A673 (cell line): ENCODE measurements at regions of chr6 and their contacts with region 1.

Region 1: GRCh38 chr6:68043122-68043398 is 592.0 kb upstream of the ADGRB3 start:
- DNase-seq: no peak
- H3K4me3 ChIP-seq: no peak overlapping the region
- H3K27ac ChIP-seq: no peak overlapping the region
- H3K4me1 ChIP-seq: no peaks in the 10 kb centered on the region
- H3K27me3 ChIP-seq: no peaks in the 10 kb centered on the region
- CTCF ChIP-seq: no peak

Region 2: GRCh38 chr6:67045076-67045475 is 998.0 kb before region 1 on chr6:
- CTCF ChIA-PET with region 1: no interaction called
- POLR2A ChIA-PET with region 1: interaction called, 10 read pairs
- intact Hi-C with region 1: no loop called
- DNase-seq: no peak
- H3K4me3 ChIP-seq: no peak overlapping the region
- H3K27ac ChIP-seq: no peak overlapping the region
- H3K4me1 ChIP-seq: no peaks in the 10 kb centered on the region
- H3K27me3 ChIP-seq: no peaks in the 10 kb centered on the region
- CTCF ChIP-seq: no peak

Region 3: GRCh38 chr6:67880939-67881705 is 161.9 kb before region 1 on chr6:
- CTCF ChIA-PET with region 1: no interaction called
- POLR2A ChIA-PET with region 1: no interaction called
- intact Hi-C with region 1: no loop called
- DNase-seq: no peak
- H3K4me3 ChIP-seq: no peak overlapping the region
- H3K27ac ChIP-seq: no peak overlapping the region
- H3K4me1 ChIP-seq: no peaks in the 10 kb centered on the region
- H3K27me3 ChIP-seq: no peaks in the 10 kb centered on the region
- CTCF ChIP-seq: no peak

Region 4: DNA sequence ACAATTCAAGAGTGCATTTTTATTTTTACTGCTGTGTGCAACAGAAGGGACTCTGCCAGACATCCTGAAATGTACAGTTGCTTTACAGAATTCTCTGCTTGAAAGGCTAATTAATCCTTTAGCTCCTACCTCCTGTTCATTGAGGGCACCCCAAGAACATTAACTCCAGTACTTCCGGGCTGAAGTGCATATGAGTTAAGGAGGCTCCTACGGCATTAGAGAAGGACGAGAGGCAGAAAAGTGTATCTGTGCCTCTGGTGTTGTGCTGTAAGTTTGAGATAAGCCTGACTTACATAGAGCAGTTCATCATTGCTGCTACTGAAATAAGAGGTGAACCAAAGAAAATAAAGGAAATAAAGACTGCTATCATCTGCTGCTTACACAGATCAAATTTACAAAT is 17.3 kb before region 1 on chr6:
- CTCF ChIA-PET with region 1: no interaction called
- POLR2A ChIA-PET with region 1: no interaction called
- intact Hi-C with region 1: no loop called
- DNase-seq: no peak
- H3K4me3 ChIP-seq: no peak overlapping the region
- H3K27ac ChIP-seq: no peak overlapping the region
- H3K4me1 ChIP-seq: no peaks in the 10 kb centered on the region
- H3K27me3 ChIP-seq: no peaks in the 10 kb centered on the region
- CTCF ChIP-seq: no peak